ENCODE measurements at regions of chrX and their contacts with region 1.

Region 1: DNA sequence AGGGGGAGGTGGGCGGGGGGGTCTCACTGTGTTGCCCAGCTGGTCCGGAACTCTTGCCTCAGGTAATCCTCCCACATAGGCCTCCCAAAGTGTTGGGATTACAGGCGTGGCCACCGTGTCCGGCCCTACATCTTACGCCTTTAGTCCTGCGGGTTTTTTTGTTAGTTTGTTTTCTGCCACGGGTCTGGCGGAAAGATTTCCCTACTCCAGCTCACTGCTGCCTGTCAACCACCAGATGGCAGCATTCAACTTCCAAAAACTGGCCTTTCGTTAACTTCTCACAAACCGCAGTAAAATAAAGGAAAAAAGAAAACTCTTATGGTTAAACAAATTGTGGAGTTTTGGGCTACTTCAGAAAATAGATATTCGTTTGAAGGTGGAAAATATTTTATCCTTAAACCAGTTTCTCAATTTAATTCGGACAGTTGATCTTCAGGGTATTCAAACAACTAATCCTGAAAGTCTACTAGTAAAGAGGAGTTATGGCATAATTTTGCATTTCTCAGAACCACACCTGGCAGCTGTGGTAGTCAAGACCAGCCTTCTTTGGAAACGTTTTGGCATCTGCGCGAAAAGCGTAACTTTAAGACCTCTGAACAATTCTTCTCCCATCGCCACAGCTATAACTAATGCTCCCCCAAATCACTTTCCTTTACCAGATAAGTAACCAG is 41.1 kb downstream of the LUZP4 start:
- DNase-seq: peak; percentile 40
- ATAC-seq: peak; percentile 87
- H3K4me3 ChIP-seq: no peak overlapping the region
- H3K27ac ChIP-seq: no peak overlapping the region
- H3K4me1 ChIP-seq: no peaks in the 10 kb centered on the region
- H3K27me3 ChIP-seq: no peaks in the 10 kb centered on the region
- CTCF ChIP-seq: peak; percentile 75 to 86 (median 78)
- EP300 ChIP-seq: no peak
- POLR2A ChIP-seq: no peak
- RAD21 ChIP-seq: peak; percentile 92

Region 2: GRCh38 chrX:115226929-115227328 is 103.7 kb before region 1 on chrX:
- CTCF ChIA-PET with region 1: no interaction called
- POLR2A ChIA-PET with region 1: no interaction called
- RAD21 ChIA-PET with region 1: interaction called, 3 read pairs
- SMC1A ChIA-PET with region 1: no interaction called
- in situ Hi-C with region 1: no loop called
- intact Hi-C with region 1: loop called (anchors 1 kb)
- DNase-seq: no peak
- ATAC-seq: peak; percentile 94
- H3K4me3 ChIP-seq: no peak overlapping the region
- H3K27ac ChIP-seq: no peak overlapping the region
- H3K4me1 ChIP-seq: no peaks in the 10 kb centered on the region
- H3K27me3 ChIP-seq: no peaks in the 10 kb centered on the region; a peak in 1 of 4 replicates
- CTCF ChIP-seq: peak; percentile 23 to 61 (median 51); a peak in 3 of 6 replicates
- EP300 ChIP-seq: no peak
- POLR2A ChIP-seq: no peak
- RAD21 ChIP-seq: peak; percentile 61; the same call in 1 of the 2 replicates

Region 3: DNA sequence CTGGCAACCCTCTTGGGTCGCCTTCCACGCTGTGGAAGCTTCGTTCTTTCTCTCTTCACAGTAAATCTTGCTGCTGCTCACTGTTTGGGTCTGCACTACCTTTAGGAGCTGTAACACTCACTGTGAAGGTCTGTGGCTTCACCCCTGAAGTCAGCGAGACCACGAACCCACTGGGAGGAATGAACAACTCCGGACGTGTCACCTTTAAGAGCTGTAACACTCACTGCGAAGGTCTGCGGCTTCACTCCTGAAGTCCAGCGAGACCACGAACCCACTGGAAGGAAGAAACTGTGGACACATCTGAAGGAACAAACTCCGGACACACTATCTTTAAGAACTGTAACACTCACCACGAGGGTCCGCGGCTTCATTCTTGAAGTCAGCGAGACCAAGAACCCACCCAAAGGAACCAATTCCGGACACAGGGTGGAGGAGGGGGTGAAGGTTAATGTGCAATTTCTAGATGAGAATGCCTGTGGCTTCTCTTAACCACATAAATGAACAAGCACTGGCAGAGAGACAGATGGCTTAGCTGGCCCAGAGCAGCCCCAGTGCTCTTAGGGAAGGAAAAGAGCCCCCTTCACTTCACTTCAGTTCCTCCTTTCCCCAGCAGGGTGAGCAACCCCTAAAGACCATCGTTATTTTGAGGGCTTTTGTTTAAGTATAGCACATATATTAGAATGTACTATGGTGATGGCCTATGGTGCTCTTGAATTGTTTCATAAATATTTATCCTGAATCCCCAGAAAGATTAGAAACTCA is 31.9 kb after region 1 on chrX:
- CTCF ChIA-PET with region 1: interaction called, 12 read pairs
- POLR2A ChIA-PET with region 1: no interaction called
- RAD21 ChIA-PET with region 1: interaction called, 6 read pairs
- SMC1A ChIA-PET with region 1: interaction called, 5 read pairs
- in situ Hi-C with region 1: no loop called
- intact Hi-C with region 1: no loop called
- DNase-seq: no peak
- ATAC-seq: peak; percentile 91
- H3K4me3 ChIP-seq: no peak overlapping the region
- H3K27ac ChIP-seq: no peak overlapping the region
- H3K4me1 ChIP-seq: no peaks in the 10 kb centered on the region
- H3K27me3 ChIP-seq: no peaks in the 10 kb centered on the region; a peak in 1 of 4 replicates
- CTCF ChIP-seq: peak in 1 of 3 experiments; percentile 13; a peak in 1 of 6 replicates
- EP300 ChIP-seq: no peak
- POLR2A ChIP-seq: no peak
- RAD21 ChIP-seq: no peak

Region 4: GRCh38 chrX:115642895-115643530 is 312.4 kb after region 1 on chrX:
- CTCF ChIA-PET with region 1: interaction called, 216 read pairs
- POLR2A ChIA-PET with region 1: no interaction called
- RAD21 ChIA-PET with region 1: interaction called, 79 read pairs
- SMC1A ChIA-PET with region 1: interaction called, 135 read pairs
- in situ Hi-C with region 1: loop called (anchors 5 kb)
- intact Hi-C with region 1: loop called (anchors 1 kb)
- DNase-seq: peak; percentile 23
- ATAC-seq: peak; percentile 72
- H3K4me3 ChIP-seq: no peak overlapping the region
- H3K27ac ChIP-seq: no peak overlapping the region
- H3K4me1 ChIP-seq: no peaks in the 10 kb centered on the region
- H3K27me3 ChIP-seq: no peaks in the 10 kb centered on the region
- CTCF ChIP-seq: peak; percentile 76 to 86 (median 83)
- EP300 ChIP-seq: no peak
- POLR2A ChIP-seq: no peak
- RAD21 ChIP-seq: peak; percentile 90

Region 5: GRCh38 chrX:115679460-115679859 is 348.8 kb after region 1 on chrX:
- CTCF ChIA-PET with region 1: interaction called, 14 read pairs
- POLR2A ChIA-PET with region 1: no interaction called
- RAD21 ChIA-PET with region 1: no interaction called
- SMC1A ChIA-PET with region 1: interaction called, 5 read pairs
- in situ Hi-C with region 1: no loop called
- intact Hi-C with region 1: no loop called
- DNase-seq: no peak
- ATAC-seq: peak; percentile 55
- H3K4me3 ChIP-seq: no peak overlapping the region
- H3K27ac ChIP-seq: no peak overlapping the region
- H3K4me1 ChIP-seq: no peaks in the 10 kb centered on the region
- H3K27me3 ChIP-seq: no peaks in the 10 kb centered on the region
- CTCF ChIP-seq: peak; percentile 21 to 26 (median 23); a peak in 1 of 6 replicates
- EP300 ChIP-seq: no peak
- POLR2A ChIP-seq: no peak
- RAD21 ChIP-seq: peak; percentile 41

Region 6: DNA sequence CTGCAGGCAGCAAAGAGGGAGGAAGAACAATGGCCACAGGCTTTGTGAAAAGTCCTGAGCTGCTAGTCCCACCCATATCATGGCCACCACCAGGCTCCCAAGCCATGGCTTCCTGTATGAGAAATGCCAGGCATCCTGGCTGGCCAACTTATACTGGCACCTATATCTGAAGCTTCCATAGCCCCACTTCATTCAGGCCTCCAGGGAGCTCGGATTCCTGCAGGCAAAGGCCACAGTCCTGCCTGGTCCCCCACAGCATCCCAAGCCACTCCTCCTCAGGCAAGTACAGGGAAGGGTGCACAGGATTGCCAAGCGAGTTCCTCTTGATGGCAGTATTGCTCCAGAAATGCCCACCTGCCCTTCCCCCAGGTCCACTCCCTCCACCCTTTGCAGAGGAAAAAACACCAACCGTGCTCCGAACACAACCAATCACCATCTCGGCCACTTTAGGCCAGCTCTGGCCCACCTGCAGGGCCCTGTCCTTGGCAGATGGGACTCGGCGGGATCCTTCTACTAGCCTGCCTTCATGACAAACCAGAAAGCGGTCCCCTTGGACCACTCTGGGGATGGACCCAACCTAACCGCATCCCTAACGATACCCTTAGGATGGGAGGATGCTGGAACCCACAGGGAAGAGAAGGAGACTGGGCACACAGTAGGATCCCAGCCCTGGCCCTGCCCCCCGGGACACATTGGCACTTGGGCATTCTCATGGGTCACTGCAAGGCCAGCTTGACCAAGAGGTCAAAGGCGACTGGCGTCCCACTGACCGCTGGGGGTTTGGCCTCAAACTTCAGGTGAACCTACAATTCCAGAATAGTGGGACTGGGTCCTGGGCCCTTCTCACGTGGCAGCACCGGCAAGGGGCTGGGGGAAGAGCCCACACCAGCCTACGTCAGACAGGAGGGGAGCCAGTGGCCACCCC is 619.5 kb after region 1 on chrX:
- CTCF ChIA-PET with region 1: no interaction called
- POLR2A ChIA-PET with region 1: no interaction called
- RAD21 ChIA-PET with region 1: no interaction called
- SMC1A ChIA-PET with region 1: no interaction called
- in situ Hi-C with region 1: no loop called
- intact Hi-C with region 1: loop called (anchors 5 kb)
- DNase-seq: no peak
- ATAC-seq: peak; percentile 29; the same call in 2 of the 3 replicates
- H3K4me3 ChIP-seq: no peak overlapping the region
- H3K27ac ChIP-seq: no peak overlapping the region
- H3K4me1 ChIP-seq: no peaks in the 10 kb centered on the region
- H3K27me3 ChIP-seq: no peaks in the 10 kb centered on the region
- CTCF ChIP-seq: peak in 2 of 3 experiments; percentile 31 to 41; a peak in 3 of 6 replicates
- EP300 ChIP-seq: no peak
- POLR2A ChIP-seq: no peak
- RAD21 ChIP-seq: peak; percentile 69